ENCODE measurements at regions of chr9 and their contacts with region 1.

Region 1: DNA sequence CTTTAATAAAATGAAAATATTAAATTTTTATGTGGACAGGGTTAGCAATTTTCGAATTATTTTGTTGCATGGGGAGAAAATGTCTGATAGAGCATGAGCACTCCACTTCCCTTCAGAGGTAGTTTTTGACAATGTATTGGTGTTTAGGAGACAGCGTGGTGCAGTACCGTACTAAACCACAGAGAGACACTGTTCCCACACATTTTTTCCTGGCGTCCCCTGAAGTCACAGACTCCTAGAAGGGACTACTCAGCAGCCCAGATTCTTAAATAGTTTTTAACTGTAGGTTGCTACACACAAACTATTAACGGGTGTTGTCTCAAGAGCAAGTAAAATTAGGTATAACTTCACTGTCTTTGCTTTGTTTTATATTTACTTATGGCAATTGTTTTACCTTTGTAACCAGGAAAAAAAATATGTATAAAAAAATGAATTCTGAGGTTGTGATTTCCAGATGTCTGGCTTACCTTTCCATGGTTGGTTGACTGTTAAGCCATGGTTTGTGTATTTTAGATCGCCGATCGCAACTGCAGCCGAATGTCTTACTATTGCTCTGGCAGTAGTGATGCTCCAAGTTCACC is 171.2 kb downstream of the DOCK8 start:
- DNase-seq: peak; percentile 48
- H3K4me3 ChIP-seq: no peak overlapping the region
- H3K27ac ChIP-seq: no peak overlapping the region
- H3K4me1 ChIP-seq: no peaks in the 10 kb centered on the region
- H3K27me3 ChIP-seq: no peaks in the 10 kb centered on the region
- CTCF ChIP-seq: peak; percentile 78 to 92 (median 86)
- POLR2A ChIP-seq: no peak

Region 2: DNA sequence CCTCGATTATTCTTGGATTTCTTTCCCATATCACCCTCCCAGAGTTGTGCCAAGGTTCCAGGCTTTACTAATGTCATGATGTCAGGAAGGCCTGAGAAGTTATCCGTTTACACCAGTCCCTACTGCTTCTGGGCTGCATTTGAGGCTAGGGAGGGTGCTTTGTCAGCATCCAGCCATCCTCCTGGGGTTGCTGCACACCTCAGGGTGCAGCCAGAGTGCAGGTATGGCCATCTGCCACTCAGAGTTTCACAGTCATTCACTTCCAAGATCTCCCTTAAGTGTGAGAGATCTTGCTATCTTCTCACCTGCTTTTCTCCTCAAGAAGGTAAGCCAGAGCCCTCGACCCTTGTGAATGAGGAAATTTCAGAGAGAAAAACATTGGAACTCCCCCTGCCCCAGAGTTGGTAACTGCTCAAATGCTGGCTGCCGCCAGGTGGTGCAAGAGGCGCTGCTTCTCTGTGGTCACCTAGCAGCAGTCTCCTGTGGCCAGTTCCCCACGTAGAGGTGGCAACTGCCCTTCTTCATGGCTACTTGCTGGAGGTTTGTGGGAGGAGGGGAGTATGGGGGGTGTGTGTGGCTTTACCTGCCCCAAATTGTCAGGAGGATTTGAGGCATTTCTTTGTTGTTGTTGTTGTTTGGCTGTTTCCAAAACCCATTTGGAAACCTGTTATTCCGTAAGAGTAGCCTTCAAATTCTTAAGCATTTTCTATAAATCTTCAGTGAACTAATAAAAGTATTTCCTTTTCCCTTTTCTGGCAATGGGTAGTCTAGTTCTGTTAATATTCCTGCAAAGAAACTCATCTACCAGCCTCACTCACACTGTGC is 196.0 kb after region 1 on chr9:
- intact Hi-C with region 1: no loop called
- DNase-seq: no peak
- H3K4me3 ChIP-seq: no peak overlapping the region
- H3K27ac ChIP-seq: no peak overlapping the region
- H3K4me1 ChIP-seq: no peaks in the 10 kb centered on the region
- H3K27me3 ChIP-seq: no peaks in the 10 kb centered on the region
- CTCF ChIP-seq: peak in 1 of 4 experiments; percentile 26
- POLR2A ChIP-seq: no peak

Region 3: GRCh38 chr9:763692-764524 is 378.0 kb after region 1 on chr9:
- intact Hi-C with region 1: loop called (anchors 5 kb)
- DNase-seq: peak; percentile 65
- H3K4me3 ChIP-seq: no peak overlapping the region
- H3K27ac ChIP-seq: no peak overlapping the region
- H3K4me1 ChIP-seq: no peaks in the 10 kb centered on the region
- H3K27me3 ChIP-seq: no peaks in the 10 kb centered on the region
- CTCF ChIP-seq: peak; percentile 35 to 93 (median 80)
- POLR2A ChIP-seq: no peak

Measured in prostate gland (tissue), 2 donors.